PC-9 (cell line): ENCODE measurements at regions of chr3 and their contacts with region 1.

Region 1: GRCh38 chr3:98901392-98902350 is at the start of gene DCBLD2:
- DNase-seq: peak; percentile 99 to 100
- H3K4me3 ChIP-seq: peak within 1 kb of the TSS; percentile 89
- H3K27ac ChIP-seq: peak within 1 kb of the TSS; percentile 54
- H3K4me1 ChIP-seq: peaks cover 47% of the 10 kb centered on the region
- H3K27me3 ChIP-seq: no peaks in the 10 kb centered on the region
- CTCF ChIP-seq: no peak
- total RNA-seq, gene DCBLD2: 83.1 and 112 TPM in 2 replicates

Region 2: GRCh38 chr3:97689111-97689510 is 1212.6 kb before region 1 on chr3:
- CTCF ChIA-PET with region 1: no interaction called
- POLR2A ChIA-PET with region 1: interaction called, 15 read pairs
- intact Hi-C with region 1: no loop called
- DNase-seq: no peak
- H3K4me3 ChIP-seq: no peak overlapping the region
- H3K27ac ChIP-seq: no peak overlapping the region
- H3K4me1 ChIP-seq: no peaks in the 10 kb centered on the region
- H3K27me3 ChIP-seq: no peaks in the 10 kb centered on the region
- CTCF ChIP-seq: no peak

Region 3: GRCh38 chr3:98513091-98513511 is 388.6 kb before region 1 on chr3:
- CTCF ChIA-PET with region 1: no interaction called
- POLR2A ChIA-PET with region 1: no interaction called
- intact Hi-C with region 1: loop called (anchors 5 kb)
- DNase-seq: peak; percentile 81 to 100
- H3K4me3 ChIP-seq: 0 out of 2 replicates have a peak overlapping the region, but pooled peaks have one; percentile 19
- H3K27ac ChIP-seq: peak overlapping the region; percentile 87
- H3K4me1 ChIP-seq: peaks cover 50% of the 10 kb centered on the region
- H3K27me3 ChIP-seq: no peaks in the 10 kb centered on the region
- CTCF ChIP-seq: no peak

Region 4: DNA sequence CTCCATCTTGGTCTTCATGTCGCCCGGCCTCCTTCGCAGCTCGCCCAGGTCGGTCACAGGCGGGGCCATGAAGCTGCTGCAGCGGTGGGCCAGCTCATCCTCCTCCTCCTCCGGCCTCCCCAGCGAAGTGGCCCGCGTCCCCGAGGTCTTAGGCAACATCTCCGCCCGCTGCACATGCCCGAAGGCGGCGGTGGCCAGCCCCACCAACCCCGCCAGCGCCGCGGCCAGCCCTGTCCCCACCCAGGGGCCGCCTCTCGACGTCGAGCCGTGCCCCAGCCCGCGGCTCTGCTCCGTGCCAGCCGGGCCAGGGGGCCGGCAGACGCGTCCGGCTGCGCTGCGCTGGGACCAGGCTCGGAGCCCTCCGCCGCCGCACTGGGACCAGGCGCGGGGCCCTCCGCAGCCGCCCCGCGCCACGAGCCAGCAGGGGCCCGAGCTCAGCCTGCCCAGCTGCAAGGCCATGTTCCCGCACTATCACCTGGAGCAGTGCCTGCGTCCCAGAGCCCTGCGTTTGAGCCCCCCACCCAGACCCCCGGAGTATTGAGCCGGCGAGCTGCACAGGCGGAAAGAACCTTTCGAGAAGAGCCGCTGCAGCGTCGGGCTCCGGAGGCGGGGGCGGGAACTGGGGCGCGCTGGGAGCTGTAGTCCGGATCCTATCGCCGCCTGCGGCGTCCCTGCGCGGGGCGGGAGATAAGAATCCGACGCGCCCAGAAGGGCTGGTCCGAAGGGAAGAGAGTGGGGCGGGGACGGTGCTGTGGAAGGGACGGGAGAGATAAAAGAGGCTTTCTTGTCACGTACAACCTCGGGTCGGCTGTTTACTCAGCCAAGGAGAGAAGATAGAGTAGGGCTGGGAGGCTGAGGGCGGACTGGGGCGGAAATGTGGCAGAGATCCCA is 308.4 kb before region 1 on chr3 and contains the start of gene CPOX:
- CTCF ChIA-PET with region 1: no interaction called
- POLR2A ChIA-PET with region 1: no interaction called
- intact Hi-C with region 1: loop called (anchors 5 kb)
- DNase-seq: peak; percentile 88 to 94
- H3K4me3 ChIP-seq: peak within 1 kb of the TSS; percentile 66
- H3K27ac ChIP-seq: peak within 1 kb of the TSS; percentile 23
- H3K4me1 ChIP-seq: peaks cover 12% of the 10 kb centered on the region
- H3K27me3 ChIP-seq: no peaks in the 10 kb centered on the region
- CTCF ChIP-seq: no peak; the same call in 1 of the 2 replicates
- total RNA-seq, gene CPOX: 30.4 and 35.2 TPM in 2 replicates

Region 5: DNA sequence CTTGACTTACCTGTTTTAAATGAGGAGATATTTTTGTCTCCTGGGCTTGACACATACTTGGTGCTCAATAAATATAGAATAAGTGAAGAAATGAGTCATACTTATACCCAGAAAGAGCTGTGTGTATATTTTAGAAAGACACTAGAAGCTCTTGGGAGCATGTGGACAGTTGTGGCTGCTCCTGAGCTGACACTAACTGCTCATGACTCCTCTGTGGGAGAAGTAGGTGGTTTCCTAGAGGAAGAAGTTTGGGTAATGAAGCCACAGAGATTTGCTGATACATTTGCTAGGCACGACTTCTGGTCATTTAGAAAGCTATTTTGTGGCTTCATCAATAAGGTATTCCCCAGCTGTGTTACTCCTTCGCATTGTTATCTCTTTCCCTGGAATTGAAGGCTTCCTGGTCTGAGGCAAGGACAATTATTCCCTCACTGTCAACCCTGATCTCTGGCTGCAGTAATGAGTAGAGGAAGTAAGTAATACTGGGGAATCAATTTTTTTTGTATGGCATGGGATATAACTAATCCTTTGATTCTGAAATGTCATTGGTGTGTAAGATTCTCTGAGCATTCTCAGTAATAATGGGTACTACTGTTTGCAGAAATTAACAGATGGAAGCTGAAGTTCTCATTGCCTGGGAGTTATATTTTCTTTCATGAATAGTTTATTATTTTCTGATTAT is 79.4 kb after region 1 on chr3:
- CTCF ChIA-PET with region 1: interaction called, 14 read pairs
- POLR2A ChIA-PET with region 1: no interaction called
- intact Hi-C with region 1: loop called (anchors 2 kb)
- DNase-seq: no peak
- H3K4me3 ChIP-seq: no peak overlapping the region
- H3K27ac ChIP-seq: 0 out of 2 replicates have a peak overlapping the region, but pooled peaks have one; percentile 7
- H3K4me1 ChIP-seq: peaks cover 29% of the 10 kb centered on the region
- H3K27me3 ChIP-seq: no peaks in the 10 kb centered on the region
- CTCF ChIP-seq: no peak

Region 6: DNA sequence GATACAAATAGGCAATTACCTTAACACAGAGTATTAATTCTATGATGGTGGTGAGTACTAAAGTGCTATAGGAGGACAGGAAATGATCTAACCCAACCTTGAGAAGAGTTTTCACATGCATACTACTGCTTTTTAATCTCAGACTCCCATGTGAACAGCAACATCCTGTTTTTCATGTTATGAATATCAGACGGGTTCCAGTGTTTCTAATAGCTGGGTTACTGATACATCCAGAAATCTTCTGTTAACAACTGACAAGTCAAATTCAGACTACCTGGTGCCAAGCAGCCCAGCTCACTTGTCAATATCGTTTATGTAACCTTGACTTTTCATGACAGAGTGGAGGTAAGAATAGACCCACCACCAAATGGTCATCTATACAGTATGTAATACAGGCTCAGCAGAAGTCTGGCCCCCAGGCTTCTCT is 516.6 kb after region 1 on chr3:
- CTCF ChIA-PET with region 1: no interaction called
- POLR2A ChIA-PET with region 1: no interaction called
- intact Hi-C with region 1: no loop called
- DNase-seq: no peak
- H3K4me3 ChIP-seq: no peak overlapping the region
- H3K27ac ChIP-seq: no peak overlapping the region
- H3K4me1 ChIP-seq: no peaks in the 10 kb centered on the region
- H3K27me3 ChIP-seq: no peaks in the 10 kb centered on the region
- CTCF ChIP-seq: no peak